Activated naive CD4-positive, alpha-beta T cell treated with anti-CD3 and anti-CD28 coated beads, Interleukin-2, amount 10 ng/mL, durations not matched to agents 7 days and 5 days (primary cell): ENCODE measurements at regions of chr15 and their contacts with region 1.

Region 1: GRCh38 chr15:55917881-55918296 is 75.5 kb downstream of the NEDD4 start:
- DNase-seq: peak; percentile 24
- H3K4me3 Mint-ChIP-seq: no peak overlapping the region
- H3K27ac Mint-ChIP-seq: no peak overlapping the region
- H3K4me1 Mint-ChIP-seq: no peaks in the 10 kb centered on the region
- H3K27me3 Mint-ChIP-seq: no peaks in the 10 kb centered on the region

Region 2: DNA sequence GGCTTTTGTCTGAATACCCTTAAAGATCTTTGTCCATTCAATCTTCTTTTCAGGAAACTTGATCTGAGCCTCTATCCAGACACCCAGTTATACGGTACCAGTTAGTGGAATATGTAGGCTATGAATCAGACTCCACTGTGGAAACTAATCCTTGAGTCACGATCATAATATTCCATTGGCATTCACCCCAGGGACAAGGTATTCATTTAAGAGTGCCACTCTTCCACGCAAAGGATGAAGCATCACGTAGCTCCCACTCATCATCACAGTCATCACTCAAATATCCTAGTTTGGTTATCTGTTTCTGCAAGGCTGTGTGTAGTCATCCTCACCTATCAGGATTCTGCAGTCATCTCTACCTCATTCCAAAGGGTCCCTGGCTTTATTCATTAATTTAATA is 10.1 kb before region 1 on chr15:
- CTCF ChIA-PET with region 1: no interaction called
- DNase-seq: no peak
- H3K4me3 Mint-ChIP-seq: no peak overlapping the region
- H3K27ac Mint-ChIP-seq: no peak overlapping the region
- H3K4me1 Mint-ChIP-seq: no peaks in the 10 kb centered on the region
- H3K27me3 Mint-ChIP-seq: no peaks in the 10 kb centered on the region

Region 3: DNA sequence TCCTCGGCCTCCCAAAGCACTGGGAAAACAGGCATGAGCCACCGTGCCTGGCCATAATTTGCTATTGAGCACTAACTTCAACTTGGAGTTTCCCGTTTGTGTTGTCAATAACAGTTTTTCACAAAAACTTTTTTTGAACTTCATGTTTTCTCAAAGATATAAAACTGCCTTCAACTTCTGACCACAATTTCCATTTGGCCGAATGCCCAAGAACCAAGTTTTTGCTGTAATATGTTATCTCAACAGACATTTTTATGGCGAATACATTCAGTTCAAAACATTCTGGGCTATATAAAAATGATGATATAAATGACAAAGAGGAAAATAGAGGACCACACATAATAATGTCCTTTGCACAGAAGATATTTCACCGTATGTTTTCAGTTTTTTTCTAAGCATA is 19.2 kb after region 1 on chr15:
- CTCF ChIA-PET with region 1: no interaction called
- DNase-seq: no peak
- H3K4me3 Mint-ChIP-seq: no peak overlapping the region
- H3K27ac Mint-ChIP-seq: no peak overlapping the region
- H3K4me1 Mint-ChIP-seq: no peaks in the 10 kb centered on the region
- H3K27me3 Mint-ChIP-seq: no peaks in the 10 kb centered on the region

Region 4: DNA sequence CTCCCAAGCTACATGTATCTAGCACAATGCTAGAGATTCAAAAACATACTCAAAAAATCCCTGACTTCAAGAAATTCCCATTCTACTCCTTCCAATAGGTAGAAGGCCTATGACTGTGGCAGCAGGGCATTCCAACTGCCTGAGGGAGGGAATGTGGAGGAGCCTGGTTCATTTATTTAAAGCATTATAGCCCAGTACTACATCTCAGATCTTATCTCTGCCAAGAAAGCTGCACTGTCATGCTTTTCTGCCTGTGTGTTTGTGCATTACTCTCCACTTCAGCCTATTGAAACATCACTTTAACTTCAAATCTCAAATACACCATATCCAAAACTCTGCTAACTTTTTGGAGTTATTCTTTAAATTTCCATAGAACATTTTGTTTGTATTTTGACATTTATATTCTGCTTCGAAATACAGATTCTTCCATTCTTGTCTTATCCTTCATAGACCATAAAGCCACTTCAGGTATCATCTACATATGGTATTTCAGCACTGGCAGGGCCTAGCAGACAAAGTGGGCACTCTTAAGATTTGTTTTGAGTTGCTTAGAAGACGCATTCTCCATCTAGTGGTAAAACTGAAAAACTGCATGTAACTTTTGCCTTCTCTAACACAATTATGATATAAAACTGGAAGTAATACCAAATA is 134.6 kb after region 1 on chr15:
- CTCF ChIA-PET with region 1: interaction called, 10 read pairs
- DNase-seq: no peak
- H3K4me3 Mint-ChIP-seq: no peak overlapping the region
- H3K27ac Mint-ChIP-seq: no peak overlapping the region
- H3K4me1 Mint-ChIP-seq: peaks cover 2% of the 10 kb centered on the region
- H3K27me3 Mint-ChIP-seq: no peaks in the 10 kb centered on the region